Caco-2 (cell line): ENCODE measurements at regions of chr10 and their contacts with region 1.

Region 1: DNA sequence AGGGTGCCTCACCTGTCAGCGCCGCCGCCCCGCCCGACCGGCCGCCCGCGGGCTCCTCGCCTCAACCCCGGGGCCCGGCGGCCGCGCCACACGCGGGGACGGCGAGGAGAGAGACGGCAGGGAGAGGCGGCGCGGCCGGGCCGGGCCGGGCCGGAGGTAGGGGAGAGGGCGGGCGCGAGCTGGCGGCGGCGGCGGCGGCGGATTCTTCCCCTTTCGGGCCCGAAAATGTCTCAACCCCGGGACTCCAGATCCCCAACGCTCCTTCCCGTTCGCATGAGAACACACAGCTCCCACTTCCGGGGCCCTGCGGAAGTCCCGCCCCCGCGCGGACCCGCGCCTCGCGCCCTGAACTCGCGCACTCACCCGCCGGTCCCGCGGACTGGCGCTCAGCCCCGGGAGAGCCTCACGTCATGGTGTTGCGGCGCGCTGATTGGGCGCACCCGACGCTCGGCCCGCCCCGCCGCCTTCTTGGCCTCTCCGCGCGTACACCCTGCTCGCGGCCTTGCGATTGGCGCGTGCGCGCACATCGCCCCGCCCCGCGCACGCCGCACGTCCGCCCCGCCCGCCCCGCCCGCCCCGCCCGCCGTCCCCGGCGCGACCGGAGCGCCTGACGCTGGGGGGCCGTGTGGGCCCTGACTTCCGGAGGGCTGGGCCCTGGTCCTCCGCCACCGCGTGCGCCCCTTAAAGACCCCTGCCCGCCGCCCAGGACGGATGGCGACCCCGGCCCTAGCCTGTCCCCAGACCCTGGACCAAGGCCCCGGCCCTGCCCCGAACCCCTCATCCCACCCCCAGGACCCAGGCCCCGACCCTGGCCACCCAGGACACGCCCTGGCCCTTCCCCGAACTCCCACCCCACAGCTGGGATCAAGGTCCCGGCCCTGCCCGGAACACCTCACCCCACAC is at the start of gene LARP4B:
- DNase-seq: peak; percentile 98 to 100
- H3K4me3 ChIP-seq: peak within 1 kb of the TSS; percentile 94
- H3K4me3 Mint-ChIP-seq: peak within 1 kb of the TSS; percentile 93
- H3K27ac Mint-ChIP-seq: peak within 1 kb of the TSS; percentile 89
- H3K4me1 ChIP-seq: peaks cover 37% of the 10 kb centered on the region
- H3K4me1 Mint-ChIP-seq: peaks cover 29% of the 10 kb centered on the region
- H3K27me3 ChIP-seq: no peaks in the 10 kb centered on the region
- H3K27me3 Mint-ChIP-seq: no peaks in the 10 kb centered on the region
- CTCF ChIP-seq: no peak
- total RNA-seq, gene LARP4B: 230 and 235 TPM in 2 replicates

Region 2: GRCh38 chr10:810351-810846 is 121.3 kb before region 1 on chr10:
- CTCF ChIA-PET with region 1: no interaction called
- POLR2A ChIA-PET with region 1: no interaction called
- intact Hi-C with region 1: no loop called
- DNase-seq: peak; percentile 48 to 59
- H3K4me3 ChIP-seq: no peak overlapping the region
- H3K4me3 Mint-ChIP-seq: no peak overlapping the region
- H3K27ac Mint-ChIP-seq: no peak overlapping the region
- H3K4me1 ChIP-seq: no peaks in the 10 kb centered on the region
- H3K4me1 Mint-ChIP-seq: no peaks in the 10 kb centered on the region
- H3K27me3 ChIP-seq: no peaks in the 10 kb centered on the region
- H3K27me3 Mint-ChIP-seq: no peaks in the 10 kb centered on the region
- CTCF ChIP-seq: peak; percentile 39 to 75

Region 3: GRCh38 chr10:970311-971149 is 38.9 kb after region 1 on chr10:
- CTCF ChIA-PET with region 1: interaction called, 6 read pairs
- POLR2A ChIA-PET with region 1: interaction called, 29 read pairs
- intact Hi-C with region 1: loop called (anchors 1 kb)
- DNase-seq: peak; percentile 91
- H3K4me3 ChIP-seq: peak overlapping the region; percentile 17
- H3K4me3 Mint-ChIP-seq: peak overlapping the region; percentile 69
- H3K27ac Mint-ChIP-seq: peak overlapping the region; percentile 89
- H3K4me1 ChIP-seq: peaks cover 69% of the 10 kb centered on the region
- H3K4me1 Mint-ChIP-seq: peaks cover 75% of the 10 kb centered on the region
- H3K27me3 ChIP-seq: no peaks in the 10 kb centered on the region
- H3K27me3 Mint-ChIP-seq: no peaks in the 10 kb centered on the region
- CTCF ChIP-seq: peak in 1 of 2 experiments; percentile 6